Common myeloid progenitor, CD34-positive (primary cell): ENCODE measurements at regions of chr1 and their contacts with region 1.

Region 1: DNA sequence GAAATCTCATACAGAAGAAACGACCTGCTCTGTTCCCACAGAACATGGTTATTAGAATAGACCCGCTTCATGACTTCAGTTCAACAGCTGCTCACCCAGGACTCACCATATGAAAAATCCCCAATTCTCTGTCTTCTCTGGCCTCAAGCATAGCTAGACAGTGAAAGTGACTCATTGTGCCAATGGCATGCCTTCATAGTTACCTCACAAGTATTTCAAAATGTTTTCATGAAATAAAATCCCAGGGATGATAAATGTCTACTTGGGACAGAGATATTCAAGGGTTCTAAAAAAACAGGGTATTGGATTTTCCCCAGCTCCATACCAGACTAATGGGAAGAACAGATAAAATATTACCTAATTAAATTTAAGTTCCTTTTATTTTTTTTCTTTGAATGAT is 82.3 kb downstream of the NOTCH2 start:
- DNase-seq: peak in 2 of 3 donors; percentile 71 to 79
- H3K4me3 ChIP-seq: no peak overlapping the region
- H3K27ac ChIP-seq: peak overlapping the region in 1 of 2 experiments; percentile 60
- H3K4me1 ChIP-seq: peaks cover 14 to 26% (median 18%) of the 10 kb centered on the region in 4 experiments
- H3K27me3 ChIP-seq: no peaks in the 10 kb centered on the region

Region 2: DNA sequence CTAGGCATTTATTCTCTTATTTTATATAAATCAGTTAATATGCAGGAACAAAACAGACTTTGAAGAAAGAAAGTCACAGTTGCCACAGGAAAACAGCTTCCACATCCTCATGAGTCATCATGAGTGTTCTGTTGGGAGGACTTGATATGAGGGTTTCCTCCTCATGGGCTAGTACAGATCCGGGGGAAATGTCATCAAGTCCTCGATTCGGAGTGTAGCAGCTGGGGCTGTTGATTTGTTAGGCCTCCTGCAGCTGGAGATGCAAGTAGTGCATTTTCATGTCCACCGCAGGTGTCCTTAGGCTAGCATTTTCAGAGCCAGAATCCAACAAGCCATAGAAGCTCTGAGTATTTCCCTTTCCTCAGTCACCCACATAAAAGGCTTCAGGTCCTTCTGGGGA is 127.5 kb before region 1 on chr1:
- CTCF ChIA-PET with region 1: no interaction called
- POLR2A ChIA-PET with region 1: no interaction called
- DNase-seq: peak; percentile 82 to 97 (median 93)
- H3K4me3 ChIP-seq: peak overlapping the region in 2 of 7 experiments; percentile 14 to 31
- H3K27ac ChIP-seq: peak overlapping the region in 1 of 2 experiments; percentile 66
- H3K4me1 ChIP-seq: peaks cover 6 to 32% (median 28%) of the 10 kb centered on the region in 4 experiments
- H3K27me3 ChIP-seq: no peaks in the 10 kb centered on the region

Region 3: GRCh38 chr1:119870917-119871596 is 116.1 kb before region 1 on chr1:
- CTCF ChIA-PET with region 1: no interaction called
- POLR2A ChIA-PET with region 1: no interaction called
- DNase-seq: peak; percentile 74 to 84 (median 75)
- H3K4me3 ChIP-seq: peak overlapping the region in 3 of 7 experiments; percentile 16 to 62 (median 41)
- H3K27ac ChIP-seq: no peak overlapping the region
- H3K4me1 ChIP-seq: peaks cover 0 to 4% (median 0%) of the 10 kb centered on the region in 4 experiments
- H3K27me3 ChIP-seq: no peaks in the 10 kb centered on the region

Region 4: DNA sequence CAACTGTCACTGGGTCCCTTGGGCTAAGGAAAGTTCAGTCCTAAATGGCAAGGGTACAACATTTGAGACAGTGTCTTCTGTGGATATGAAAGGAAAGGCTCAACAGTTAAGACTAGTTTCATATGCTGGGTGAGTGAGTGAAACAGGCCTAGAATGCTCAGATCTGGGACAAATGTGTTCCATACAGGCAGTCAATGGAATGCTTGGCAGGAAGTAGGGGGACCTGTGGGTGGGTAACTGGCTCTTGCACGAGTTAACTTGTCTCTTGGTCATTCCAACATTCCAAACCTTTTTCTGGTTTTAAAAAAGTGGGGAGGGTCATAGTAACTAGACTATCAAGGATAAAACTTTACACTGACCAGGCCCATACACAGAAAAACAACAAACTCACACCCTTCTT is 73.0 kb before region 1 on chr1:
- CTCF ChIA-PET with region 1: no interaction called
- POLR2A ChIA-PET with region 1: no interaction called
- DNase-seq: no peak
- H3K4me3 ChIP-seq: no peak overlapping the region
- H3K27ac ChIP-seq: no peak overlapping the region
- H3K4me1 ChIP-seq: peaks cover 4 to 12% (median 12%) of the 10 kb centered on the region in 4 experiments
- H3K27me3 ChIP-seq: no peaks in the 10 kb centered on the region

Region 5: GRCh38 chr1:119924948-119925898 is 61.9 kb before region 1 on chr1:
- CTCF ChIA-PET with region 1: no interaction called
- POLR2A ChIA-PET with region 1: no interaction called
- DNase-seq: no peak
- H3K4me3 ChIP-seq: no peak overlapping the region
- H3K27ac ChIP-seq: no peak overlapping the region
- H3K4me1 ChIP-seq: no peaks in the 10 kb centered on the region
- H3K27me3 ChIP-seq: no peaks in the 10 kb centered on the region

Region 6: GRCh38 chr1:119968068-119968492 is 19.0 kb before region 1 on chr1:
- CTCF ChIA-PET with region 1: interaction called, 15 read pairs
- POLR2A ChIA-PET with region 1: no interaction called
- DNase-seq: peak; percentile 78 to 89 (median 87)
- H3K4me3 ChIP-seq: no peak overlapping the region
- H3K27ac ChIP-seq: no peak overlapping the region
- H3K4me1 ChIP-seq: peaks cover 0 to 4% (median 4%) of the 10 kb centered on the region in 4 experiments
- H3K27me3 ChIP-seq: no peaks in the 10 kb centered on the region